IMR-90 (cell line): ENCODE measurements at regions of chr19 and their contacts with region 1.

Region 1: GRCh38 chr19:3251229-3251628 is 26.8 kb downstream of the CELF5 start:
- DNase-seq: no peak
- ATAC-seq: no peak
- H3K4me3 ChIP-seq: no peak overlapping the region
- H3K27ac ChIP-seq: no peak overlapping the region
- H3K4me1 ChIP-seq: no peaks in the 10 kb centered on the region
- H3K27me3 ChIP-seq: peaks cover 5% of the 10 kb centered on the region
- CTCF ChIP-seq: no peak
- POLR2A ChIP-seq: no peak
- RAD21 ChIP-seq: no peak

Region 2: GRCh38 chr19:3006075-3006767 is 245.0 kb before region 1 on chr19:
- CTCF ChIA-PET with region 1: no interaction called
- POLR2A ChIA-PET with region 1: interaction called, 40 read pairs
- dilution Hi-C with region 1: no loop called
- in situ Hi-C with region 1: no loop called
- intact Hi-C with region 1: no loop called
- DNase-seq: no peak
- ATAC-seq: no peak
- H3K4me3 ChIP-seq: no peak overlapping the region
- H3K27ac ChIP-seq: no peak overlapping the region
- H3K4me1 ChIP-seq: no peaks in the 10 kb centered on the region
- H3K27me3 ChIP-seq: peaks cover 12% of the 10 kb centered on the region; the same call in 1 of the 2 replicates
- CTCF ChIP-seq: no peak
- POLR2A ChIP-seq: no peak
- RAD21 ChIP-seq: no peak

Region 3: DNA sequence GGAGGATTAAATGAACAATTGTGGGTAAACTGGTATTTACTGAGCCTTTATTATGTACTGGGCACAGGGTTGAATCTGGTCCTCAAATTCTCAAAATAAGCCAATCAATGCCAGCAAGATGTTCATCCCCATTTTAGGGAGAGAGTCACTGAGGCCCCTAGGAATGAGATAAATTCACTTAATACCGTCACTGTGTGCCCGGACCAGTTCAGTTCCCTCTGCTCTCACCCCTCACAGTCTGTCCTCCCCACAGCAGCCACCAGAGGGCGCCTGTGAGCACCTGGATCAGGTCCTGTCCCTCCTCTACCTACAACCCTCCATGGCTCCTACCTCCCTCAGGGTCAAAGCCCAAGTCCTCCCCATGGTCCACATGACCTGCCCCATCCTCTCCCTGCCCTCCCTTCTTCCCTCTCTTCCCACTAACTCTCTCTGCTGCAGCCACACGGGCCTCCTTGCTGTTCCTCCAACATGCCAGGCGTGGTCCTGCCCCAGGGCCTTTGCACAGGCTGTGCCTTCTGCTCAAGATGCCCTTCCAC is 73.2 kb after region 1 on chr19:
- CTCF ChIA-PET with region 1: no interaction called
- POLR2A ChIA-PET with region 1: no interaction called
- dilution Hi-C with region 1: no loop called
- in situ Hi-C with region 1: no loop called
- intact Hi-C with region 1: no loop called
- DNase-seq: no peak
- ATAC-seq: peak; percentile 51; the same call in 1 of the 2 replicates
- H3K4me3 ChIP-seq: no peak overlapping the region
- H3K27ac ChIP-seq: no peak overlapping the region
- H3K4me1 ChIP-seq: no peaks in the 10 kb centered on the region
- H3K27me3 ChIP-seq: peaks cover 7% of the 10 kb centered on the region; the same call in 1 of the 2 replicates
- CTCF ChIP-seq: peak; percentile 57
- POLR2A ChIP-seq: no peak
- RAD21 ChIP-seq: peak; percentile 49